ENCODE measurements at regions of chr19 and their contacts with region 1.

Region 1: DNA sequence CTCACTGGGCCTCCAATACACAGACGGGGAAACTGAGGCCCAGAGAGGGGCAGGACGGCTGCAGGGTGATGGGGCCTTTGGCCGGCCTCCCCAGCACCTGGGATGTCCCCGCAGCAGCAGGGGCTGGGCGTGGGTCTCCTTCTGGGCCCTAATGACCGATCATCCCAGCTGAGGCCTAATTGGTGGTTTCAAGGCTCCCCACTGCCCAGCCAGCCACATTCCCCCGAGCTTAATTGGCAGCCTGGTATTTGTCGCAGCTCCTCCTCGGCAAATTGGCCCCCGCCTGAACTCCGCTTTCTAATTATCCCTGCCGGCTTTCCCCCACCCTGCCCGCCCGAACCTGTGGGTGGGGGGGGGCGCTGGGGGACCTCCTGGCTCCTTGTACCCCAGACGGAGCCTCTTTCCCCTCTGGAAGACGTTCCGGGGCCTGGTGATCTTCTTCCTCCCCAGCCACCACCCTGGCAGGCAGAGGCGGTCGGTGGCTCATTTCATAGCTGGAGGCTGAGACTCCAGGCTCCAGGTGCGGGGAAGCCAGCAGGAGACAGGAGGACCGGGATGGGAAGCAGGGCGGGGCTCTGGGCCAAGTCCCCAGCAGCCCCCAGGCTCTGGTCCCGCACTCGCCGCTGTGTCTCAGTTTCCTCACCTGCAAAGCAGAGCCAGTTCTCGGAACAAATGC is 27.2 kb upstream of the WDR18 start:
- DNase-seq: peak; percentile 76 to 81
- H3K4me3 ChIP-seq: peak overlapping the region; percentile 54
- H3K27ac ChIP-seq: peak overlapping the region; percentile 81
- H3K4me1 ChIP-seq: peaks cover 55% of the 10 kb centered on the region
- H3K27me3 ChIP-seq: no peaks in the 10 kb centered on the region
- CTCF ChIP-seq: no peak

Region 2: GRCh38 chr19:977058-977692 is 20.3 kb after region 1 on chr19:
- CTCF ChIA-PET with region 1: interaction called, 3 read pairs
- POLR2A ChIA-PET with region 1: interaction called, 27 read pairs
- intact Hi-C with region 1: no loop called
- DNase-seq: no peak
- H3K4me3 ChIP-seq: no peak overlapping the region
- H3K27ac ChIP-seq: no peak overlapping the region
- H3K4me1 ChIP-seq: peaks cover 11% of the 10 kb centered on the region
- H3K27me3 ChIP-seq: no peaks in the 10 kb centered on the region
- CTCF ChIP-seq: no peak

Measured in PC-9 (cell line).